Colonic mucosa (tissue), 4 donors: ENCODE measurements at regions of chr2 and their contacts with region 1.

Region 1: GRCh38 chr2:222318026-222318711 is 19.4 kb upstream of the PAX3 start:
- DNase-seq: peak; percentile 82
- H3K4me3 ChIP-seq: peak overlapping the region; percentile 35
- H3K27ac ChIP-seq: no peak overlapping the region
- H3K4me1 ChIP-seq: no peaks in the 10 kb centered on the region
- H3K27me3 ChIP-seq: peaks cover 28% of the 10 kb centered on the region
- CTCF ChIP-seq: peak; percentile 44

Region 2: DNA sequence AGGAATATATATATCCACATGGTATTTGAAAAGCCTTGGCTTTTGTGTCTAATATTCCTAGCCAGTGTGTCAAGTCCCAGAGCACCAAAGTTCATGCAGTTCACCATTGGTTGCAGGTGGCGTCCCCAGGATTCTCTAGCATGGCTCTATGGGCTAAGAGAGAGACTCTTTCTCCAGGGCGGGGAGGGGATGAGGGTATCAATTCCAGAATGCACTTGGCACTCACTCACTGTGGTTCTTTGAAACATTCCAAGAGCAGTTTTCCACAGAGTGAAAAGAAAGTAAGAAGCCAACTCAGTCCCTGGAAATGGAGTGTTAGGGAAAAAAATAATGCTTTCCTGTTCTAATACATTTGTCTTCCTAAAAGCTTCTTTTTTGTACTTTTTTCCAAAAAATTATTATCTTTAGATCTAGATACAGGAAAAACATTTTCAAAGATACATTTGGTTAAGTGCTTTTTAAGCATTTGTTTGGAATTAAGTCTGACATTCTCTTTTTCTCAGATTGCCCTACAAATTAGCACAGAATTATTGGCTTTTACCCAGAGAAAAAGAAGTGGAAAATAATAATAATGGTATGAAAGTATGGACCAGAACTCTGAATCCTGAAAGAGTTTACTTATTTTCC is 259.2 kb before region 1 on chr2:
- intact Hi-C with region 1: no loop called
- DNase-seq: no peak
- H3K4me3 ChIP-seq: no peak overlapping the region
- H3K27ac ChIP-seq: no peak overlapping the region
- H3K4me1 ChIP-seq: no peaks in the 10 kb centered on the region
- H3K27me3 ChIP-seq: no peaks in the 10 kb centered on the region
- CTCF ChIP-seq: no peak

Region 3: GRCh38 chr2:222483513-222484039 is 165.4 kb after region 1 on chr2:
- intact Hi-C with region 1: loop called (anchors 10 kb)
- DNase-seq: peak; percentile 46
- H3K4me3 ChIP-seq: no peak overlapping the region
- H3K27ac ChIP-seq: no peak overlapping the region
- H3K4me1 ChIP-seq: no peaks in the 10 kb centered on the region
- H3K27me3 ChIP-seq: no peaks in the 10 kb centered on the region
- CTCF ChIP-seq: no peak

Region 4: GRCh38 chr2:222561817-222562645 is 243.9 kb after region 1 on chr2:
- intact Hi-C with region 1: loop called (anchors 5 kb)
- DNase-seq: peak; percentile 67
- H3K4me3 ChIP-seq: no peak overlapping the region
- H3K27ac ChIP-seq: no peak overlapping the region
- H3K4me1 ChIP-seq: no peaks in the 10 kb centered on the region
- H3K27me3 ChIP-seq: no peaks in the 10 kb centered on the region
- CTCF ChIP-seq: peak; percentile 58

Region 5: DNA sequence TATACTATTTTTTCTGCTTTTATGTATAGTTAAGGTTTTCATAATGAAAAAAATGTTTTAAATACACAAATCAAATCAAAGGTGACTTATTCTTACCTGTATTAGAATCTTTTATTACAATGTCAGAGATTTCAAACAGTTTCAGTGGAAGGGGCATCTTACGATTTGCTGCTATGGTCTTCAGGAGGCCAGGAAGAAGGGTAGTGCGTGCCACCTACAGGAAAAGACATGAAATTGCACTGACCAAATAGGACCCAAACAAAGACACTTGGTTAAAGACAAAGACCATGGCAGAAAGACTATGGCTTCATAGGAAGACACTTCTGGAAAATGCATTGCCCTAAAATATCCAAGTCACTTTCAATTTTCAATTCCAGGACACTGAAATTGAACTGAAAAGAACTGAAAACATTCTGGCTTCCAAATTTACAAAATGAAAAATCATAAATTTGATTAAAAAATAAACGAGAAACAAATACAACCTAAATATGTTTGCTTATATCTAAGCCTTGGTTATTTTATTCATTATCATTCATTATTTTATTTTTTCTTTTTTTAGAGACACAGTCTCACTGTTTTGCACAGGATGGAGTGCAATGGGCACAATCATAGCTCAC is 295.7 kb after region 1 on chr2:
- intact Hi-C with region 1: loop called (anchors 5 kb)
- DNase-seq: no peak
- H3K4me3 ChIP-seq: no peak overlapping the region
- H3K27ac ChIP-seq: no peak overlapping the region
- H3K4me1 ChIP-seq: no peaks in the 10 kb centered on the region
- H3K27me3 ChIP-seq: no peaks in the 10 kb centered on the region
- CTCF ChIP-seq: peak; percentile 52